Tibial artery (tissue), 4 donors: ENCODE measurements at regions of chr4 and their contacts with region 1.

Region 1: GRCh38 chr4:79823148-79823763 is 249.8 kb downstream of the ANTXR2 start:
- DNase-seq: no peak
- H3K4me3 ChIP-seq: no peak overlapping the region
- H3K27ac ChIP-seq: peak overlapping the region; percentile 26 to 43
- H3K4me1 ChIP-seq: peaks cover 0 to 14% (median 5%) of the 10 kb centered on the region in 4 donors
- H3K27me3 ChIP-seq: no peaks in the 10 kb centered on the region
- CTCF ChIP-seq: no peak

Region 2: DNA sequence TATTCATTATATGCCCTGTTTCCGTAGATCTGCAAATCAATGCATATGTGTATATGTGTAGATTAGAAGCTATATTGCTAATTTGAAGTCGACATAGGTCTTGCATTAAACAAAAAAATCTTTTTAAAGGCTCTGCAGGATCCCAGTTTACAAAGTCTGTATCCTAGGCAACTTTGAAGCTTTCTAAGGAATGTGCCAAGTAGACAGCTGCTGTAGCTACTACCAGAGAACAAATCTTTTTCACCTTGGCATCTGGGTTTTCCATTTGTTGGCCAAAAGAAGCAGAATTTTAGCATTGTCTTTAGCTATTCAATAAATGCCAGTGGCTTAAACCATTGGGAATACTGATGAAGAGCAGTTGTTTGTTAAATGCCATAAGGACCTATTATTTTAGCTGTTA is 585.4 kb before region 1 on chr4:
- intact Hi-C with region 1: loop called (anchors 5 kb)
- DNase-seq: no peak
- H3K4me3 ChIP-seq: no peak overlapping the region
- H3K27ac ChIP-seq: no peak overlapping the region
- H3K4me1 ChIP-seq: peaks cover 0 to under 1% (median 0%) of the 10 kb centered on the region in 4 donors
- H3K27me3 ChIP-seq: no peaks in the 10 kb centered on the region
- CTCF ChIP-seq: no peak

Region 3: GRCh38 chr4:79842162-79842561 is 18.9 kb after region 1 on chr4:
- intact Hi-C with region 1: no loop called
- DNase-seq: no peak
- H3K4me3 ChIP-seq: no peak overlapping the region
- H3K27ac ChIP-seq: no peak overlapping the region
- H3K4me1 ChIP-seq: no peaks in the 10 kb centered on the region
- H3K27me3 ChIP-seq: no peaks in the 10 kb centered on the region
- CTCF ChIP-seq: no peak